Sigmoid colon (tissue), 7 donors: ENCODE measurements at regions of chr15 and their contacts with region 1.

Region 1: GRCh38 chr15:56918046-56918938 is at the start of gene TCF12:
- DNase-seq: peak; percentile 97
- H3K4me3 ChIP-seq: peak within 1 kb of the TSS; percentile 94 to 99 (median 98)
- H3K27ac ChIP-seq: peak within 1 kb of the TSS; percentile 97 to 100 (median 98)
- H3K4me1 ChIP-seq: peaks cover 0 to 48% (median 25%) of the 10 kb centered on the region in 4 donors
- H3K27me3 ChIP-seq: no peaks in the 10 kb centered on the region
- CTCF ChIP-seq: peak in 3 of 4 experiments; percentile 13 to 38 (median 18)
- EP300 ChIP-seq: peak in 2 of 4 donors; percentile 34 to 38
- POLR2A ChIP-seq: peak; percentile 20 to 65
- total RNA-seq, gene TCF12: 77.8 to 147 (median 119) TPM

Region 2: GRCh38 chr15:56886932-56887781 is 31.1 kb before region 1 on chr15:
- intact Hi-C with region 1: loop called (anchors 1 kb)
- DNase-seq: peak; percentile 97
- H3K4me3 ChIP-seq: peak overlapping the region; percentile 63 to 81 (median 68)
- H3K27ac ChIP-seq: peak overlapping the region; percentile 92 to 98 (median 96)
- H3K4me1 ChIP-seq: peaks cover 0 to 24% (median 14%) of the 10 kb centered on the region in 4 donors
- H3K27me3 ChIP-seq: no peaks in the 10 kb centered on the region
- CTCF ChIP-seq: no peak
- EP300 ChIP-seq: peak in 1 of 4 donors; percentile 42
- POLR2A ChIP-seq: peak; percentile 66 to 72

Region 3: DNA sequence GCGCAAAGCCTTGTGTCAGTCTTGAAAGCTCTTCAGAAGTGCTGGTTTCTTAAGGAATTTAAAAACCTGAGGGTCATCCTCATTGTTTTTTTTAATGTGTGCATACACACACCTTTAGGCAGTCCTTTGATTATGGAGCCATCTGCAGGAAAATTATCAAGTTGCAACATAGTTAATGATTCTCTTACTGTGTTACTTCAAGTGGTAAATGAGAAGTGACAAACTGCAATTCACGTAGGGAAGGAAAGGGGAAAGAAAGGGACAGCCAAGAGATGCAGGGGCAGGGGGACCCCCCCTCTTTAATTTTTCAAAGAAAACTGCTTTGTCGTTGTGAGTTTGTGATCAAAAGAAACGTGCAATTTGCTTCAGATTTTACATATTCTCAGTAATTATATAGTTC is 295.6 kb after region 1 on chr15:
- intact Hi-C with region 1: loop called (anchors 5 kb)
- DNase-seq: no peak
- H3K4me3 ChIP-seq: no peak overlapping the region
- H3K27ac ChIP-seq: no peak overlapping the region
- H3K4me1 ChIP-seq: peaks cover 0 to 58% (median 31%) of the 10 kb centered on the region in 4 donors
- H3K27me3 ChIP-seq: no peaks in the 10 kb centered on the region
- CTCF ChIP-seq: peak in 3 of 4 experiments; percentile 32 to 47 (median 46)
- EP300 ChIP-seq: no peak
- POLR2A ChIP-seq: no peak

Region 4: GRCh38 chr15:57306161-57306943 is 388.1 kb after region 1 on chr15:
- intact Hi-C with region 1: loop called (anchors 2 kb)
- DNase-seq: peak; percentile 89
- H3K4me3 ChIP-seq: peak overlapping the region; percentile 30 to 58 (median 51)
- H3K27ac ChIP-seq: peak overlapping the region in 2 of 4 donors; percentile 12 to 27
- H3K4me1 ChIP-seq: peaks cover 0 to 16% (median 14%) of the 10 kb centered on the region in 4 donors
- H3K27me3 ChIP-seq: no peaks in the 10 kb centered on the region
- CTCF ChIP-seq: peak; percentile 68 to 86 (median 78)
- EP300 ChIP-seq: no peak
- POLR2A ChIP-seq: no peak